ENCODE measurements at regions of chr10 and their contacts with region 1.

Region 1: DNA sequence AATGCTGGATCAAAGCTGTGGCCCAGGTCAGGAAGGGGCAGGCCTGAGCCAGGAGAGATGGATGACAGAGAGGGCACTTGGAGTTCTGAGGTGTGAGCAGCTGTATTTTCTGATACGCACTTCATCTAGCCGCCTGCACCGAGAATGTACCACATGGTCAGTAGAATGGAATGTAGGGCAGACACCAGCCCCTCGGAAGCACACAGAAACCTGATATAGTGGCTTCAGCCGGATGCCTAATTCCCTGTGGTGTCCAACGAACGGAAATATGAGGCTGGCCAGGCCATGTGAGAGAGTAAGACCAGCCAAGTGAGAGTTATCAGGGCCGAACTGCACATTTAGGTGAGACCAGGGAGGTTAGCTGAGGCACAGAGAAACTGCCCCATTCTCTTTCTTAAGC is 46.7 kb upstream of the PLCE1 start:
- DNase-seq: peak; percentile 19 to 65 (median 34)
- H3K4me3 ChIP-seq: no peak overlapping the region
- H3K27ac ChIP-seq: peak overlapping the region in 1 of 2 donors; percentile 43
- H3K4me1 ChIP-seq: peaks cover 8% of the 10 kb centered on the region
- H3K27me3 ChIP-seq: no peaks in the 10 kb centered on the region
- CTCF ChIP-seq: no peak
- EP300 ChIP-seq: no peak
- POLR2A ChIP-seq: no peak

Region 2: GRCh38 chr10:93711891-93712290 is 235.2 kb before region 1 on chr10:
- intact Hi-C with region 1: no loop called
- DNase-seq: no peak
- H3K4me3 ChIP-seq: no peak overlapping the region
- H3K27ac ChIP-seq: no peak overlapping the region
- H3K4me1 ChIP-seq: no peaks in the 10 kb centered on the region
- H3K27me3 ChIP-seq: no peaks in the 10 kb centered on the region
- CTCF ChIP-seq: no peak
- EP300 ChIP-seq: no peak
- POLR2A ChIP-seq: no peak

Region 3: DNA sequence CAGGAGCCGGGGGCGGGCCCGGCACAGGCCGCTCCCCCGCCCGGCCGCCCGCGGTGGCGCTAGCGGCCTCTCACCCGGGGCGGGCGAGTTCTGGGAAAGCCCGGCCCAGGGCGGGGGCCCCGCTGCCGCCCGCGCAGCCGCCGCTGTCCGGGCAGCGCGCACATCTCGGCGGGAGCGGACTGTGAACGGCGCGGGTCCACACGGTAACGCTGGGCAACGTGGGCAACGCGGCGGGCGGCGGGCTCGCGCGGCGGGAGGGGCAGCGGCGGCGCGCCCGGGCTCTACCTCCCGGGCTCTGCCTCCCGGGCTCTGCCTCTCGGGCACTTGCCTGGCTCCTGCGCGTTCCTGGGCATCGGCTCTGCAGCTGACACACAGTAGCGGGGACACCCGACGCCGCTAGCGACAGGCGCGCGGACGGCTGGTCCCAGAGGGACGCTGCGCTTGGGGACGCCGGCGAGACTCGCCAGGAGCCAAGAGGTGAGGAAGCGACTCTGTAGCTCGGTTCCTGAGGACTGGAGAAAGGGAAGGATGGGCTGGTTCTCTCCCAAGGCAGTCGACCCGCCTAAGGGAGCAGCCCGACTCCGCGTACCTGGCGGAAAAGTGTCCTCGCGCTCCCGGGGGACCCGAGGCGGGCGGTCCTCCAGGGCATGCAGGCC is 46.9 kb after region 1 on chr10 and contains the start of gene PLCE1:
- intact Hi-C with region 1: loop called in 1 of 4 experiments (anchors 10 kb)
- DNase-seq: peak; percentile 43 to 73 (median 48)
- H3K4me3 ChIP-seq: peak within 1 kb of the TSS; percentile 65
- H3K27ac ChIP-seq: no peak within 1 kb of the TSS
- H3K4me1 ChIP-seq: peaks cover 5% of the 10 kb centered on the region
- H3K27me3 ChIP-seq: no peaks in the 10 kb centered on the region
- CTCF ChIP-seq: no peak
- EP300 ChIP-seq: no peak
- POLR2A ChIP-seq: peak; percentile 5
- total RNA-seq, gene PLCE1: 2.5 to 15.3 (median 8.8) TPM